ENCODE measurements at regions of chr3 and their contacts with region 1.

Region 1: DNA sequence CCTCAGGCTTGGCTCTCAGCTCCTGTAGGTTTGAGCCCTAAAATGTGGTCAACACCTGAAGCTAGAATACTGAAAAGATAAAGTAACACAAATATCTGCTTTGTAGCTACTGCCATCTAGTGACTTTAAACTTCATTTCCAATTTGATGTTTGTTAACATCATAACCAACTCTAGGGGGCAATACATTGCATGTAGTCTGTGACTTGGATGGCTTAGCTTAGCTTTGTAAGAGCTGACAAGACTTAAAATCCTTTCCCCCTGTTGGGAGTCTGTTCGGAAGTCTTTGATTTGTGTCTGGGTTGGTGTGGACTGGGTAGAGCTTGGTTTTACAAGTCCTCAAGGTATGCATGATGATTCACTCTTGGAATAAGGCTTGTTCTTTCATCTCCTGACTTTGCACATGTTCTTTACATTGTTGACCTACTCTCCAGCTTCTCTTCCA is 51.7 kb downstream of the SCN11A start:
- DNase-seq: peak; percentile 21
- H3K4me3 ChIP-seq: no peak overlapping the region
- H3K27ac ChIP-seq: no peak overlapping the region
- H3K27me3 ChIP-seq: peaks cover 4% of the 10 kb centered on the region
- CTCF ChIP-seq: peak; percentile 95

Region 2: DNA sequence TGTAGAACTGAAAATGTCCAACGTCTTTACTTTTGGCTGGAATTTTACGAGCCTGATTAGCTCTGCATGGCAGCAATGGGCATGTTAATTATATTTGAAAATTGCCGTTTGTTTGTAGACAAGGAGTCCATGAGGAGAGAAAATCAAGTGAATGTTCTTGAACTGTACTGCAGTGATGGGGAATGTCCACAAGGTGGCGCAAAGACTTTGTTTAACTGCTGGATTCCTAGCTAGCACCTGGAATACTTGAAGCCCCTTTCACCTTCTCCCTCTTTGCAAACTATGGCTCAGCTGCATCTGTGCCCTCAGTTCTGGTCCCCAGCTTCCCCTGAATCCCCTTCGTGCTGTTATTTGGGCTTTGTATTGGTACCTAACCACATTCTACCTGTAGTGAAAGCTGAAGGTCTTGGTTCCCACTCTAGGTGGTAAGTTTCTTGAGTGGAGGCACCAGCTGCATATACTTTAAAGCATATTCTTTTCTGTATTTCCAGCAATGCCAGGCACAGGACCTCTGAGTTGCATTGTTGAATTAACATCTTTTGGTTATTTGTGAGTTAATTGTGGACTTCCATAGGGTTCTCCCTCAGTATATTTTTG is 478.5 kb before region 1 on chr3:
- CTCF ChIA-PET with region 1: interaction called, 109 read pairs
- POLR2A ChIA-PET with region 1: no interaction called
- DNase-seq: peak; percentile 49
- H3K4me3 ChIP-seq: no peak overlapping the region
- H3K27ac ChIP-seq: no peak overlapping the region
- H3K27me3 ChIP-seq: no peaks in the 10 kb centered on the region
- CTCF ChIP-seq: peak; percentile 88

Region 3: GRCh38 chr3:38689774-38690173 is 310.3 kb before region 1 on chr3:
- CTCF ChIA-PET with region 1: interaction called, 11 read pairs
- POLR2A ChIA-PET with region 1: no interaction called
- DNase-seq: no peak
- H3K4me3 ChIP-seq: no peak overlapping the region
- H3K27ac ChIP-seq: no peak overlapping the region
- H3K27me3 ChIP-seq: peaks cover 4% of the 10 kb centered on the region
- CTCF ChIP-seq: peak; percentile 21; the same call in 1 of the 2 replicates

Region 4: DNA sequence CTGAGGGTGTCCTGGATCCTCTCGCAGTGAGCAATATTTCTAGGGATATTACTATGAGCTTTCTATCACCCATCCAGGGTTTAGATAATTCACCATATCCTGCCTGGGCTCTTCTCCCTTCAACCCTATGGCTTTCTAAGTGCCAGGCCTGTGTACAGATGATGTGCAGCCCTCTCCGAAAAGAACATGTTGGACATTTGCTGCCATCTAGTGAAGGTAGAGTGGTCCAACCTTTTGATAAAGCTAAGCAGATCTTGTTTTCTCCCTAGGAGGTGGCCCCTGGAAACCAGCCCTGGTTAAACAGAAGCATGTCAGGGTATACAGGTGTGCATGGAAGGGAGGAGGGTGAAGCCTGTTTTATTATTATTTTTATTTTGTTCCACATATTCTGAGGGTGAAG is 156.1 kb before region 1 on chr3:
- CTCF ChIA-PET with region 1: interaction called, 27 read pairs
- POLR2A ChIA-PET with region 1: no interaction called
- DNase-seq: peak; percentile 29
- H3K4me3 ChIP-seq: no peak overlapping the region
- H3K27ac ChIP-seq: no peak overlapping the region
- H3K27me3 ChIP-seq: peaks cover 5% of the 10 kb centered on the region
- CTCF ChIP-seq: peak; percentile 70

Region 5: GRCh38 chr3:38969317-38970235 is 30.5 kb before region 1 on chr3:
- CTCF ChIA-PET with region 1: interaction called, 12 read pairs
- POLR2A ChIA-PET with region 1: no interaction called
- DNase-seq: no peak
- H3K4me3 ChIP-seq: no peak overlapping the region
- H3K27ac ChIP-seq: no peak overlapping the region
- H3K27me3 ChIP-seq: peaks cover 3% of the 10 kb centered on the region
- CTCF ChIP-seq: no peak

Region 6: DNA sequence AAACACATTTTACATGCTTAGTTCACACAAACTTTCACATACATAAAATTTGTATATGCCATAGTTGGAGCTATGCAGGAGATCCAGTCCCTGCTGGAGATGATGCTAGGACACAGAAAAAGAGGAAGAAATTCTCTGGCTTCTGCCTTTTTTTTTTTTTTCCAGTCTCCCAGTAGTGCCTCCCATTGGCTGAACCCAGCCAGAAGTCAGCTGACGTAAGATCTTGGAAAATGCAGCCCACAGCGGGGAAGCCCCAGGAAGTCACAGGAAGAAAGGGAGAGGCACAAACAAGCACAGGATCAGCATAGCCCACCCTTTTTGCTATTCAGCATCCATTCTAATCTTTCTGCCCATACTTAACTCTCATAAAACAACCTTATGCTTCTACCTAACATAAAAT is 13.3 kb after region 1 on chr3:
- CTCF ChIA-PET with region 1: interaction called, 60 read pairs
- POLR2A ChIA-PET with region 1: no interaction called
- DNase-seq: no peak
- H3K4me3 ChIP-seq: no peak overlapping the region
- H3K27ac ChIP-seq: no peak overlapping the region
- H3K27me3 ChIP-seq: no peaks in the 10 kb centered on the region
- CTCF ChIP-seq: no peak

Region 7: DNA sequence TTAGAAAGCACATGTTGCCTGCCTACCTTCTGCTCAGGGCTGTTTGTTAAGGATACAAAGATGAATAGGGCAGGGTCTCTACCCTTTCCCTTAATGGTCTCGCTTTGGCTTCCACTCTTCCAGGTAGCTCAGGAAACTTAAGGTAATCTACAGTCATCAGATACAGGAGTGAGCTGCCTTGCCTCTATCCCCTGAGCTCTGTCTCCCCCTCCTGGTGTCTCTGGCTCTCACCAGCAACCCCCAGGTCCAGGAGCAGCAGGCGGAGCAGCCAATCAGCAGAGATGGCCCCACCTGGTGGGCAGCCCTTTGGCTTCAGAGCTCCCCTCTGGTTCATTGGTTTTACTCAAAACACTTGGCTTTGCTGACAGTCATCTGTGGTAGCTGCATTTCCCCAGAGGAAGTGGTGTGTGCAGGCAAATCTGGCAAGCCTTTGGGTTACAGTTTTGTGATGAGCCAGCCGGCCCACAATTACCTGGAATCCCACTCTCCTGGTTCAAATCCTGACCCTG is 288.3 kb after region 1 on chr3:
- CTCF ChIA-PET with region 1: interaction called, 10 read pairs
- POLR2A ChIA-PET with region 1: no interaction called
- DNase-seq: peak; percentile 46
- H3K4me3 ChIP-seq: no peak overlapping the region
- H3K27ac ChIP-seq: no peak overlapping the region
- H3K27me3 ChIP-seq: no peaks in the 10 kb centered on the region
- CTCF ChIP-seq: peak; percentile 96